ENCODE measurements at regions of chr9 and their contacts with region 1.

Region 1: DNA sequence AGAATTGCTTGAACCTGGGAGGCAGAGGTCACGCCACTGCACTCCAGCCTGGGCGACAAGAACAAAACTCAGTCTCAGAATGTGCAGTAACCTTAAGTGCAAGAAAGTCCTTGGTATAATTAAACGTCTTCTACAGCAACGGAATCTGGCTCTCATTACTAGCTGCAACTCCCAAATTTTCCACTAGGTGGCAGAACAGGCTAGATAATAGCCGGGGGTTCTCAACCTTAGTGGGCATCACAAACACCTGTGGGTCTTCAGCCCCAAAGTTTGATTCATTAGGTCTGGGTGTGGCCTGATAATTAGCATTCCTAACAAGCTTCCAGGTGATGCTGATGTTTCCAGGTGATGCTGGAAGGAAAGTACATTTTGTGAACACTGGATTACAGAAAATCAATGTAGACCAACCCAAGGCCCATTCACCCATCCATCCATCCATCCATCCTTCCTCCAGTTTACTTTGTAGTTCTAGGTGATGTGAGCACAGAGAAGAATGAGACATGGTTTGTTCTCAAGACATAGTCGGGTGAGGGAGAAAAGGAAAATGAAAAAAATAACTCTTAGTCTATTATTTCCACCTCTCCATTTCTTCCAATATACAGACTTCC is 37.3 kb downstream of the FBXW2 start:
- DNase-seq: peak; percentile 74
- ATAC-seq: peak; percentile 73
- H3K4me3 Mint-ChIP-seq: no peak overlapping the region
- H3K27ac Mint-ChIP-seq: peak overlapping the region; percentile 68
- H3K4me1 Mint-ChIP-seq: peaks cover 27% of the 10 kb centered on the region
- H3K27me3 Mint-ChIP-seq: no peaks in the 10 kb centered on the region

Region 2: GRCh38 chr9:120742951-120743416 is 12.9 kb before region 1 on chr9:
- CTCF ChIA-PET with region 1: interaction called, 11 read pairs
- POLR2A ChIA-PET with region 1: no interaction called
- intact Hi-C with region 1: no loop called
- DNase-seq: no peak
- ATAC-seq: peak; percentile 91
- H3K4me3 Mint-ChIP-seq: no peak overlapping the region
- H3K27ac Mint-ChIP-seq: no peak overlapping the region
- H3K4me1 Mint-ChIP-seq: no peaks in the 10 kb centered on the region
- H3K27me3 Mint-ChIP-seq: no peaks in the 10 kb centered on the region

Region 3: GRCh38 chr9:120773256-120773655 is 17.3 kb after region 1 on chr9:
- CTCF ChIA-PET with region 1: interaction called, 31 read pairs
- POLR2A ChIA-PET with region 1: interaction called, 4 read pairs
- intact Hi-C with region 1: no loop called
- DNase-seq: no peak
- ATAC-seq: no peak
- H3K4me3 Mint-ChIP-seq: no peak overlapping the region
- H3K27ac Mint-ChIP-seq: no peak overlapping the region
- H3K4me1 Mint-ChIP-seq: peaks cover 6% of the 10 kb centered on the region
- H3K27me3 Mint-ChIP-seq: no peaks in the 10 kb centered on the region

Region 4: GRCh38 chr9:120807607-120808379 is 51.9 kb after region 1 on chr9:
- CTCF ChIA-PET with region 1: no interaction called
- POLR2A ChIA-PET with region 1: no interaction called
- intact Hi-C with region 1: no loop called
- DNase-seq: no peak
- ATAC-seq: no peak
- H3K4me3 Mint-ChIP-seq: no peak overlapping the region
- H3K27ac Mint-ChIP-seq: no peak overlapping the region
- H3K4me1 Mint-ChIP-seq: no peaks in the 10 kb centered on the region
- H3K27me3 Mint-ChIP-seq: no peaks in the 10 kb centered on the region

Region 5: DNA sequence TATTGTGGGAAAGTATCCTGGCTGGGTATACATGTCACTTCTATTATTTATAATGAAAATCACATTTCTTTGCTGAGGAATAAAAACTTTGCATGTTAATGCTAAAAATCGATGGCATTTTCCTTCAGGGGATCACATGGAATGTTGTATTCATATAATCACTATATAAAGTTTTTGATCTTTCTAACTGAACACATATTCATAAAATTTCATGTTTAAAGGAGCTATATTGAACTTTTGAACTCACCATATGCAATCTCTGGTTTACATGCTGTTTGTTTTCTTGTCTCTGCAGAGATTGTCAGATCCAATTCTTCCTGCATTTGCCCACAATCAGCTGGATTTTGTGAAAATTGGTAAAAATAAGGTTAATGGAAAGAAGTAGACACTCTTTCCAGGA is 204.1 kb after region 1 on chr9:
- CTCF ChIA-PET with region 1: interaction called, 11 read pairs
- POLR2A ChIA-PET with region 1: no interaction called
- intact Hi-C with region 1: no loop called
- DNase-seq: no peak
- ATAC-seq: no peak
- H3K4me3 Mint-ChIP-seq: no peak overlapping the region
- H3K27ac Mint-ChIP-seq: no peak overlapping the region
- H3K4me1 Mint-ChIP-seq: no peaks in the 10 kb centered on the region
- H3K27me3 Mint-ChIP-seq: no peaks in the 10 kb centered on the region

Region 6: GRCh38 chr9:121059998-121060636 is 304.2 kb after region 1 on chr9:
- CTCF ChIA-PET with region 1: interaction called, 53 read pairs
- POLR2A ChIA-PET with region 1: no interaction called
- intact Hi-C with region 1: loop called (anchors 1 to 2 kb)
- DNase-seq: peak; percentile 37
- ATAC-seq: no peak
- H3K4me3 Mint-ChIP-seq: no peak overlapping the region
- H3K27ac Mint-ChIP-seq: no peak overlapping the region
- H3K4me1 Mint-ChIP-seq: peaks cover 16% of the 10 kb centered on the region
- H3K27me3 Mint-ChIP-seq: no peaks in the 10 kb centered on the region

Region 7: DNA sequence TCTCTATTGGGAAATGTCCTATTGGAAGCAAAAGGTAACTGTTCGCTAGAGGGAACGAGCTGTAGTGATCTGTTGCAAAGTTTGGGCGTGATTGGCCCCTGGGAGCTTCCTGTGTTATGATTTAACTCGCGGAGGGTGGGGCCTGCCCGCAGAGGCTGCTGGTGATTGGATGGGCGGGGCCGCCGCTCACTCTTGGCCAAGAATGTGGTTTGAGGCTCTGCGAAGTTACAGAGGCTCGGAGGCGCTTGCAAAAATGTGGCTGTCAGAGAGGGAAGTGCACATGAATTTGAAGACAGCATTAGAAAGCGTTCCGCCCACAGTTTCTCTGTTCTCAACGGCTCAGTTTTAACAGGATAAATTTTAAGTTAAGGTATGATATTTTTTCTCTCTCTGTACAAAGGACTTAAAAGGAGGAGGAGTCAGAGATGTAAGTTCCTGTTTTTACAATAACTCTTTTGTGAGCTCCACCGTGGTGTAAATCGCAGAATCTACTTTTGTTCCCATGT is 365.7 kb after region 1 on chr9:
- CTCF ChIA-PET with region 1: interaction called, 11 read pairs
- POLR2A ChIA-PET with region 1: no interaction called
- intact Hi-C with region 1: no loop called
- DNase-seq: peak; percentile 98
- ATAC-seq: peak; percentile 99
- H3K4me3 Mint-ChIP-seq: peak overlapping the region; percentile 79
- H3K27ac Mint-ChIP-seq: peak overlapping the region; percentile 90
- H3K4me1 Mint-ChIP-seq: peaks cover 51% of the 10 kb centered on the region
- H3K27me3 Mint-ChIP-seq: no peaks in the 10 kb centered on the region

Measured in activated CD4-positive, alpha-beta T cell treated with anti-CD3 and anti-CD28 coated beads for 36 hours (primary cell).